Activated T-helper 2 cell treated with anti-CD3 and anti-CD28 coated beads, Interferon-gamma antibody, Interleukin-2, Interleukin-4, amounts not matched to agents 10 μg/mL and 5 μg/mL and 100 μg/mL, durations not matched to agents 14 hours and 24 hours and 36 hours (primary cell): ENCODE measurements at regions of chr5 and their contacts with region 1.

Region 1: DNA sequence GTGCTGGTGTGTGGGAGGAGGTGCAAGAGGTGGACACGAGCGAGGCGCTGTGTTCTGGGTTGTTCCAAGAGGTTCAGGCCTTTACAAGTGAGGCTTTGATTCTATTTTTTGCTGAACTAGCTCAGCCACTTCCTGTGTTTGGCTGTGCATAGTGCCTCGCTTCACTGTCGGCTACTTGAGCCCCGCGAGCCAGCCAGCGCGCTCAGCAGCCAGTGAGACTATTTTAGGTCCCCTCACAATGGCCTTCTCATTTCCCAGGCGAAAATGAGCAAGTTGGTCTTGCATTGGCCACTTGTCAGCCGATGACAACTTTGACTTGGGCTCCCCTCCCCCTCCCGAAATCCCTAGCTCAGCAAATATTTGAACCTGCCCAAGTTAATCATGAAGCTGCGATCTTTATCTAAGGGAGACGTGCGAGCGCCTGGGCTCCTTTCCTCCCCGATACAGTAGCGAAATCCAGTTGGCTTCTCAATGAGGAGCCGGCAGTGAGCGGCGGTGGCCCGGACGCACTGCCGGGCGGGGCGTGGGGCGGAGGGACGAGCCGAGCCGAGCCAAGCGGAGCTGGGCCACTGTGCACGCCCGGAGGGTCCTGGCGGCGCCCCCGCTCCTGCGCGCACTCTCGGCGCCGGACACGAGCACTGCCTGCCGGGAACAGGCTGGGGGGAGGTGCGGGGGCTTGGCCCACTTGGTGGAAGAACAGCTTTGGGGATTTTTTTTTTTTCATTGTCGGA is 72.6 kb downstream of the PIK3R1 start:
- DNase-seq: peak; percentile 42
- H3K4me3 Mint-ChIP-seq: peak overlapping the region; percentile 86
- H3K27ac Mint-ChIP-seq: peak overlapping the region; percentile 82
- H3K4me1 Mint-ChIP-seq: peaks cover 86% of the 10 kb centered on the region
- H3K27me3 Mint-ChIP-seq: no peaks in the 10 kb centered on the region

Region 2: DNA sequence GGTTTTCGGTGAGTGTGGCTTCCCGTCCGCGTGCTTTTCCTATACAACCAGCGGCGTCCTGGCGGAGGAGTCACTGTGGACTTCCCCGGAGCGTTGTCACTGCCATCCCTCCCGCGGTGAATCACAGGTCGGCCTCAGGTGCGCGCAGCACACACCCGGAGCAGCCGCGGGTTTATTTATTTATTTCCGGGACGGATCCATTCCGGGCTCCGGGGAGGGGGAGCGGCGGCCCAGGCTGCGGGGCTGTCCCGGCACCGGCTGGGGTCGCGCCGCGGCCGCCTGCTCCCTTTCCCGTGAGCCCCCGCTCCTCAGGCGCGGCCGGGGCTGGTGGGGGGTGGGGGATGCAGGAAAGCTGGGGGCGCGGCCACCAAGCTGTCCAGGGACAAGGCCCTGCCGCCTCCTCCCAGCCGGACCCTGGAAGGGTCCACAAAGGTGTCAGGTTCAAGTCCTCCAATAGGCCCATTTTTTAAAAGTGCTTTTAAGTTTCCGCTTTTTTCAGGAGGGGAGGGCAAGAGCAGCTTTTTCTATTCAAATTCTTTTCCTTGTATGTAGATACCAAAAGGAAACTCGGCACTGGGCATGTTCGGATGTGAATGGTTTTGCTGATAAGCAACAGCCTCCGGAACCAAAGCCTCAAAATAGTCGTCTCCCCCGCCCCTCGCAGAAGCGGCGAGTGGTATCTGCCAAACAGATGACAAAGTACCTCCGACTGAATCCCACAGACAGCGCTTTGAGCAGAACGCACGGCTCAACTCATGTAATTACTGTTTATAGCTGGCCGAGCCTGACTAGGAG is 1284.0 kb before region 1 on chr5:
- intact Hi-C with region 1: loop called (anchors 10 kb)
- DNase-seq: peak; percentile 85
- H3K4me3 Mint-ChIP-seq: peak overlapping the region; percentile 82
- H3K27ac Mint-ChIP-seq: peak overlapping the region; percentile 82
- H3K4me1 Mint-ChIP-seq: peaks cover 56% of the 10 kb centered on the region
- H3K27me3 Mint-ChIP-seq: peaks cover 17% of the 10 kb centered on the region

Region 3: DNA sequence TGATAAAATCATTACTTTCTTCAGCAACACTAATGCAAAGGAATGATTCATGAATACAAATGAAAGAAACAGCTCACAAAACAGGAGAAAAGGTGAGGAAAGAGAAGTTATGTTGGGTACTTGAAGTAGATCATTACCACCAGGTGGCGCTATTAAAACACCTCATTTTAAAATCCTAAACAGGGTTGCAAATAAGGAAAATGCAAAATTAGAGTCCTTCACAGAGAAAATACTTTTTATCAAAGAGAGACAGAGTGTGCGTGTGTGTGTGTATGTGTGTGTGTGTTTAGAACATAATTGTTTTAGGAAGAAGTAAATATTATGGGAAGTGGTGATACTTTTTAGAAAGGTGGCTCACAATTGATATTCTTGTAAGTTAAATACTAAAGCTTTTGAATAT is 1042.0 kb before region 1 on chr5:
- intact Hi-C with region 1: loop called (anchors 10 kb)
- DNase-seq: no peak
- H3K4me3 Mint-ChIP-seq: no peak overlapping the region
- H3K27ac Mint-ChIP-seq: no peak overlapping the region
- H3K4me1 Mint-ChIP-seq: peaks cover 10% of the 10 kb centered on the region
- H3K27me3 Mint-ChIP-seq: peaks cover 1% of the 10 kb centered on the region

Region 4: DNA sequence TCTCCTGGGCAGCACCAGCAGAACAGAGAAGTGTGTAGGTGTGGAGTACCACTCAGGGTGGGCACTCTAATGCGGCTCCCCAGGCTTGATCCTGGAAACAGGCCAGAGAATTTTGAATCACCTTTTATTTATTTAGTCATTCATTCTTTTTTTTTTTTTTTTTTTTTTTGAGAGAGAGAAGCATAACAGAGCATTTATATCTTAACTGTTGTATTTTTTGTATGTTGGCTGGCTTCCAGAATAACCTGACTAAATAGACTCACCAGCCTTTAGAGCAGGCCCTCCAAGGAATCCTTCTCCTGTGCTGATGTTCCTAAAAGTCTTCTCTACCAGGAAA is 80.8 kb after region 1 on chr5:
- intact Hi-C with region 1: no loop called
- DNase-seq: no peak
- H3K4me3 Mint-ChIP-seq: peak overlapping the region; percentile 22
- H3K27ac Mint-ChIP-seq: peak overlapping the region; percentile 77
- H3K4me1 Mint-ChIP-seq: peaks cover 60% of the 10 kb centered on the region
- H3K27me3 Mint-ChIP-seq: no peaks in the 10 kb centered on the region

Region 5: GRCh38 chr5:68379275-68380036 is 91.3 kb after region 1 on chr5:
- intact Hi-C with region 1: loop called (anchors 5 kb)
- DNase-seq: no peak
- H3K4me3 Mint-ChIP-seq: no peak overlapping the region
- H3K27ac Mint-ChIP-seq: peak overlapping the region; percentile 61
- H3K4me1 Mint-ChIP-seq: peaks cover 70% of the 10 kb centered on the region
- H3K27me3 Mint-ChIP-seq: peaks cover 2% of the 10 kb centered on the region

Region 6: GRCh38 chr5:68884883-68885282 is 596.7 kb after region 1 on chr5:
- intact Hi-C with region 1: loop called (anchors 5 kb)
- DNase-seq: no peak
- H3K4me3 Mint-ChIP-seq: no peak overlapping the region
- H3K27ac Mint-ChIP-seq: no peak overlapping the region
- H3K4me1 Mint-ChIP-seq: peaks cover 50% of the 10 kb centered on the region
- H3K27me3 Mint-ChIP-seq: no peaks in the 10 kb centered on the region

Region 7: GRCh38 chr5:69007726-69008368 is 719.7 kb after region 1 on chr5:
- intact Hi-C with region 1: loop called (anchors 5 kb)
- DNase-seq: peak; percentile 51
- H3K4me3 Mint-ChIP-seq: no peak overlapping the region
- H3K27ac Mint-ChIP-seq: no peak overlapping the region
- H3K4me1 Mint-ChIP-seq: no peaks in the 10 kb centered on the region
- H3K27me3 Mint-ChIP-seq: peaks cover 37% of the 10 kb centered on the region